OCI-LY7 (cell line): ENCODE measurements at regions of chr4 and their contacts with region 1.

Region 1: GRCh38 chr4:39134683-39135319 is 47.5 kb upstream of the WDR19 start:
- DNase-seq: peak; percentile 40
- H3K4me3 ChIP-seq: peak overlapping the region; percentile 6
- H3K27ac ChIP-seq: peak overlapping the region; percentile 3
- H3K4me1 ChIP-seq: peaks cover 20% of the 10 kb centered on the region
- CTCF ChIP-seq: no peak

Region 2: DNA sequence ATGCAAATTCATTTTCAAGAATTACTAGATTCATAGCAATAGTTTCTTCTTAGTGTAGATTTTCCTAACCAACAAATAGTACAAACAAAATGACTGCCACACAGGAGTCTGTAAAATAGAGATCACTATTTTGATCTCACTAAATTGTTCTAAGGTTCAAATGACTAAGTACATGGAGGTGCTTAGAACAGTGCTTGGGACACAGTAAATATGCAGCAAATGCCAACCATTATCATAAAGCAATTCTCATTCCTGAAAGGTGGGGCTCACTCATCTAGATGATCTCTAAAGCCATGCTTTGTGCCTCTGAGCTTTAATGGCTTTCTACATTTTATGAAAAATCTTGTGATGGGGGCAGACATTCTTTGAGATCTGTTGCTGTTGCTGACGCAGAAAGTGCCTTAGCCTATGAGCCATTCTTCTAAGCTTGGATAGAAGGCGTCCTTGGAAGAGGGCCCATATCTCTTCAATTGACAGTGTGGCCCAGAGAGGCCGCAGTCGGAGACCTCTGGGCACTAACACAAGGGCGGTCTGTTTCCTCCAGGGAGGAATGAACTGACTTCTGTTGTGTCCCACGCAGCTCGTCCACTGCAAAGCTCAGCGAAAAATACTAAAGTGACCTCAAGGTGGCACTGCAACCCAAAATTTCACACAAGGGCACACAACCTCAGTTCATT is 375.6 kb before region 1 on chr4:
- CTCF ChIA-PET with region 1: interaction called, 8 read pairs
- POLR2A ChIA-PET with region 1: interaction called, 3 read pairs
- intact Hi-C with region 1: loop called (anchors 2 kb)
- DNase-seq: peak; percentile 83
- H3K4me3 ChIP-seq: peak overlapping the region; percentile 18
- H3K27ac ChIP-seq: peak overlapping the region; percentile 99
- H3K4me1 ChIP-seq: peaks cover 63% of the 10 kb centered on the region
- CTCF ChIP-seq: peak; percentile 95

Region 3: GRCh38 chr4:38889143-38889542 is 245.7 kb before region 1 on chr4:
- CTCF ChIA-PET with region 1: no interaction called
- POLR2A ChIA-PET with region 1: interaction called, 13 read pairs
- intact Hi-C with region 1: no loop called
- DNase-seq: no peak
- H3K4me3 ChIP-seq: no peak overlapping the region
- H3K27ac ChIP-seq: no peak overlapping the region
- H3K4me1 ChIP-seq: no peaks in the 10 kb centered on the region
- CTCF ChIP-seq: no peak

Region 4: GRCh38 chr4:39181905-39182638 is 47.3 kb after region 1 on chr4 and contains the start of gene WDR19:
- CTCF ChIA-PET with region 1: interaction called, 3 read pairs
- POLR2A ChIA-PET with region 1: no interaction called
- intact Hi-C with region 1: loop called (anchors 2 kb)
- DNase-seq: peak; percentile 100
- H3K4me3 ChIP-seq: peak within 1 kb of the TSS; percentile 83
- H3K27ac ChIP-seq: peak within 1 kb of the TSS; percentile 55
- H3K4me1 ChIP-seq: peaks cover 17% of the 10 kb centered on the region
- CTCF ChIP-seq: peak; percentile 81
- total RNA-seq, gene WDR19: 40.5 and 41.2 TPM in 2 replicates

Region 5: GRCh38 chr4:39436218-39436560 is 301.4 kb after region 1 on chr4:
- CTCF ChIA-PET with region 1: no interaction called
- POLR2A ChIA-PET with region 1: no interaction called
- intact Hi-C with region 1: loop called (anchors 5 kb)
- DNase-seq: no peak
- H3K4me3 ChIP-seq: no peak overlapping the region
- H3K27ac ChIP-seq: no peak overlapping the region
- H3K4me1 ChIP-seq: no peaks in the 10 kb centered on the region
- CTCF ChIP-seq: no peak